Mammary epithelial cell (primary cell): ENCODE measurements at regions of chr10 and their contacts with region 1.

Region 1: GRCh38 chr10:91694170-91694794 is 61.4 kb upstream of the PPP1R3C start:
- DNase-seq: peak; percentile 48
- H3K4me3 ChIP-seq: no peak overlapping the region
- H3K27ac ChIP-seq: no peak overlapping the region
- H3K4me1 ChIP-seq: peaks cover 23% of the 10 kb centered on the region
- H3K27me3 ChIP-seq: no peaks in the 10 kb centered on the region
- CTCF ChIP-seq: peak; percentile 89 to 95

Region 2: DNA sequence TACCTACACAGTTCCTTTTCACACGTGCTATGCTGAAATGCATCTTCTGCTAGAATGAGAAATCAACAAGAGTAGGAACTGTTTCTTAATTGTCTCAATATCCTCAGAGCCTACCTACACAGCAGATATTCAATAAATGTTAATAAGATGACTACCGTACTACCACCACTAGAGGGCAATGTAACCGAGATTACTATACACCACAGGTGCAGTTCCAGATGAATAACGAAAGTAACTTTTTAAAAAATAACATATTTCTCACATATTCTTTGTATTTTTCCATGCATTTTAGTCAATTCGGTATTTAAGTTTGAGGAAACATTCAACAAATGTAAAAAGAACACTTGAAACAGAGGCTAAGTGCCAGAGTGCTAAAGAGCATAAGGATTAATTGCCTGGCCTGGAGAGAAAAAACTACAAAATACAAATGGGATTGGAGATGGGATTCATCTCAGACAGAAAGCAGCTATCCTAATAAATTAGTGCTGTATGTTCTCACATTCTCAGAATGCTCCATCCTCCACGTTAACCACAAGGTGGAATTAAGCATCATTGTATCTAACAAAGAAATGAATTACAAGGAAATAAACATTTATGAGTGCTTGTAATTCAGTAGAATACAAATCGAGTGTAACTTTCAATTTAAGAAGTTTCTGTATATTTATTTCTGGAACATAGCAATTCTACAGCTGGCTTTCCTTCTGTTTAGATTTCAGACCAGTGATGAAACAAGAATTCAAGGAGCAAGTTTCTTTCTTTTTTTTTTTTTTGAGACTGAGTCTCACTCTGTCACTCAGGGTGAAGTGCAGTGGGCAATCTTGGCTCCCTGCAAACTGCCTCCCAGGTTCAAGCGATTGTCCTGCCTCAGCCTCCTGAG is 304.4 kb before region 1 on chr10:
- CTCF ChIA-PET with region 1: no interaction called
- dilution Hi-C with region 1: no loop called
- in situ Hi-C with region 1: no loop called
- intact Hi-C with region 1: loop called (anchors 5 kb)
- DNase-seq: peak; percentile 36
- H3K4me3 ChIP-seq: no peak overlapping the region
- H3K27ac ChIP-seq: no peak overlapping the region
- H3K4me1 ChIP-seq: no peaks in the 10 kb centered on the region
- H3K27me3 ChIP-seq: peaks cover 2% of the 10 kb centered on the region
- CTCF ChIP-seq: peak; percentile 54 to 55

Region 3: GRCh38 chr10:91406322-91406721 is 288.0 kb before region 1 on chr10:
- CTCF ChIA-PET with region 1: no interaction called
- dilution Hi-C with region 1: no loop called
- in situ Hi-C with region 1: no loop called
- intact Hi-C with region 1: no loop called
- DNase-seq: no peak
- H3K4me3 ChIP-seq: no peak overlapping the region
- H3K27ac ChIP-seq: no peak overlapping the region
- H3K4me1 ChIP-seq: peaks cover 9% of the 10 kb centered on the region
- H3K27me3 ChIP-seq: no peaks in the 10 kb centered on the region
- CTCF ChIP-seq: no peak

Region 4: DNA sequence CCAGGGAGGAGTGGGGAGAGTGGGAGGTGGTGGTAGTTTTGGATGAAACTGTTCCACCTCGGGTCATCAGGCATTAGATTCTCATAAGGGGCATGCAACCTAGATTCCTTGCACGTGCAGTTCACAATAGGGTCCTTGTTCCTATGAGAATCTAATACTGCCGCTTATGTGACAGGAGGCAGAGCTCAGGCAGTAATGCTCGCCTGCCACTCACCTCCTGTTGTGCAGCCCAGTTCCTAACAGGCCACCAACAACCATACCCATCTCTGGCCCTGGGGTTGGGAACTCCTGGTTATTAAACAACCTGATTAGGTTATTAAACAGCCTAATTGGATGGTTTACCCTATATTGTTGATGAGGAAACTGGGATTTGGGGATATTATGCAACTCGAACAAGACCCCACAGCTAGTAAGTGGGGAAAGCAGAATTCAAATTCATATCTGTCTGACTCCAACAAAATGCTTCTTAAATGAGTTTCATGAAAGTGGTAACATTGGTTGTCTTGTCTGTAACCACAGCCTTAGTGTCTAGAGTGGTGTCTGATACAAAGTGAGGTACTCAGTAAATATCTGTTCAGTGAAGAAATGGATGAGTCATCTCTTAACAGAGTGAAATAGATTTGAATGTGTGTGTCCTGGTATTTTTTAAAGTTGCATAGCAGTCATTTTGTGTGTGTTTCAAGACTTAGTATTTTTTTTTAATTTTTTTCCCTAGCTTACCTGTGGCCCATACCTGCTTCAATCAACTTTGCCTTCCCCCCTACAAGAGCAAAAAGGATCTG is 182.5 kb before region 1 on chr10:
- CTCF ChIA-PET with region 1: no interaction called
- dilution Hi-C with region 1: no loop called
- in situ Hi-C with region 1: no loop called
- intact Hi-C with region 1: loop called (anchors 5 kb)
- DNase-seq: peak; percentile 75
- H3K4me3 ChIP-seq: no peak overlapping the region
- H3K27ac ChIP-seq: no peak overlapping the region
- H3K4me1 ChIP-seq: peaks cover 11% of the 10 kb centered on the region
- H3K27me3 ChIP-seq: no peaks in the 10 kb centered on the region
- CTCF ChIP-seq: no peak

Region 5: GRCh38 chr10:91632671-91633550 is 61.4 kb before region 1 on chr10 and contains the start of gene PPP1R3C:
- CTCF ChIA-PET with region 1: interaction called, 7 read pairs
- dilution Hi-C with region 1: no loop called
- in situ Hi-C with region 1: loop called in 1 of 2 experiments (anchors 5 kb)
- intact Hi-C with region 1: loop called (anchors 1 kb)
- DNase-seq: peak; percentile 84
- H3K4me3 ChIP-seq: peak within 1 kb of the TSS; percentile 53 to 71 (median 55)
- H3K27ac ChIP-seq: peak within 1 kb of the TSS; percentile 15
- H3K4me1 ChIP-seq: peaks cover 19% of the 10 kb centered on the region
- H3K27me3 ChIP-seq: no peaks in the 10 kb centered on the region
- CTCF ChIP-seq: peak in 1 of 2 donors; percentile 36
- total RNA-seq, gene PPP1R3C: 0.49 to 11.3 TPM

Region 6: DNA sequence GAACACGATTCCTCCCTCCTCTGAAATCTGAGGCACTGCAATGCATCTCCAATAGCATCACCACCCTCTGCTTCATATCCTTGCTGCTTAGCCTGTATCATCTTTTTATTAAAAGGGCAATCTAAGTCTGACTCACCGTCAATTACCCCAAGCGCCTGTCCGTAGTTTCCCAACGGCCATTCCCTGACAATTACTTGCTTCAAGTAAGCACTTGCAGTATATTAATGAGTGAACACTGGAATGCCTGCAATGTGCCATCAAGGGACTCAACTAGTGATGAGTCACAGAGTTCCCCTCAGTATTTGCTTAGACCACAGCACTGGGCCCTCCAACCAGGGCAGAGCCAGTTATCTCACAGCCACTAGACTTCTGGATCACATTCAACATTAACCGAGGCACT is 41.9 kb before region 1 on chr10:
- CTCF ChIA-PET with region 1: no interaction called
- dilution Hi-C with region 1: no loop called
- in situ Hi-C with region 1: loop called in 1 of 2 experiments (anchors 5 kb)
- intact Hi-C with region 1: loop called (anchors 1 kb)
- DNase-seq: peak; percentile 98
- H3K4me3 ChIP-seq: peak overlapping the region in 1 of 3 experiments; percentile 51
- H3K27ac ChIP-seq: peak overlapping the region; percentile 98
- H3K4me1 ChIP-seq: peaks cover 34% of the 10 kb centered on the region
- H3K27me3 ChIP-seq: no peaks in the 10 kb centered on the region
- CTCF ChIP-seq: no peak

Region 7: DNA sequence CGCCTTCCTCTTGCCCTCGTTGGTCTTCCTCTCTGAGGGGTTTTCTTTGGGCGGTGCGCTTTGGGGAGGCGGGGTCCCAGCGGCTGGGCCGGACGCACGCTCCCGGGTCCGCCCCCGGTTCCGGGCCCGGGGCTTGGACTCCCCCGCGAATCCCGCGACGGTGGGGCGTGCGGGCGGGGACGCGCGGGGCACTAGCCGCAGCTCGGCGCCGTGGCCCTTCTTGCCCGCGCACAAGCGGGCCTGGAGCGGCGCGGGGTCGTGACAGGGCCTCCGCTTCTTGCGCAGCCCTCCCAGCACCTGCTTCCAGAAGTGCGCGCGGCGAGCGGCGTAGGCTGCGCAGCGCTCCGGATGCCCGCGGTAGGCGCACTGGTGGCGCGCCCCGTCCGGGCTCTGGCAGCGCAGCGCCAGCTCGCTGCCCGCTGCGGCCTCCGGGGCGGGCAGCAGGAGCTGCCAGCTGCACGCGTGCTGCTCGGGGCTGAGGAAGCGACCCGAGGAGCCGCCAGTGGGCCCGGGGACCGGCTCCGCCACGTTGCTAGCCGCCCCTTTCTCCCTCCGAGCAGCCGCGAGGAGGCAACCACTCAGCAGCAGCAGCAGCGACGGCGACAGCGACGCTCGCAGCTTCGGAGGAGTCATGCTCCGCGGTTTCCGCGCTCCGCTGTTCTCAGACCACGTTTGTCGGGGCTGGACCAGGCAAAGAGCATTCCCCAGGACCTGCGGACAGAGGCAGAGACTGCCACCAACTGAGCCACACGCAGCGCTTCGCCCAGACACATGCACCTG is 214.2 kb after region 1 on chr10:
- CTCF ChIA-PET with region 1: no interaction called
- dilution Hi-C with region 1: no loop called
- in situ Hi-C with region 1: no loop called
- intact Hi-C with region 1: loop called (anchors 5 kb)
- DNase-seq: peak; percentile 71
- H3K4me3 ChIP-seq: peak overlapping the region; percentile 65 to 68 (median 67)
- H3K27ac ChIP-seq: no peak overlapping the region
- H3K4me1 ChIP-seq: peaks cover 15% of the 10 kb centered on the region
- H3K27me3 ChIP-seq: no peaks in the 10 kb centered on the region
- CTCF ChIP-seq: peak; percentile 13 to 38